Cardiac septum (tissue), 1 donor: ENCODE measurements at regions of chr18 and their contacts with region 1.

Region 1: GRCh38 chr18:61551586-61551985 is 218.4 kb downstream of the CDH20 start:
- DNase-seq: no peak

Region 2: GRCh38 chr18:61635901-61636528 is 84.4 kb after region 1 on chr18:
- intact Hi-C with region 1: loop called (anchors 5 kb)
- DNase-seq: no peak

Region 3: GRCh38 chr18:61738488-61738887 is 186.9 kb after region 1 on chr18:
- intact Hi-C with region 1: loop called (anchors 10 kb)
- DNase-seq: no peak

Region 4: GRCh38 chr18:61901323-61901986 is 349.9 kb after region 1 on chr18:
- intact Hi-C with region 1: loop called (anchors 2 kb)
- DNase-seq: no peak